ENCODE measurements at regions of chr11 and their contacts with region 1.

Region 1: GRCh38 chr11:43895601-43896000 is 15.0 kb downstream of the ALKBH3 start:
- DNase-seq: no peak
- ATAC-seq: no peak
- H3K4me3 Mint-ChIP-seq: no peak overlapping the region
- H3K27ac Mint-ChIP-seq: no peak overlapping the region
- H3K4me1 Mint-ChIP-seq: no peaks in the 10 kb centered on the region
- H3K27me3 Mint-ChIP-seq: no peaks in the 10 kb centered on the region

Region 2: DNA sequence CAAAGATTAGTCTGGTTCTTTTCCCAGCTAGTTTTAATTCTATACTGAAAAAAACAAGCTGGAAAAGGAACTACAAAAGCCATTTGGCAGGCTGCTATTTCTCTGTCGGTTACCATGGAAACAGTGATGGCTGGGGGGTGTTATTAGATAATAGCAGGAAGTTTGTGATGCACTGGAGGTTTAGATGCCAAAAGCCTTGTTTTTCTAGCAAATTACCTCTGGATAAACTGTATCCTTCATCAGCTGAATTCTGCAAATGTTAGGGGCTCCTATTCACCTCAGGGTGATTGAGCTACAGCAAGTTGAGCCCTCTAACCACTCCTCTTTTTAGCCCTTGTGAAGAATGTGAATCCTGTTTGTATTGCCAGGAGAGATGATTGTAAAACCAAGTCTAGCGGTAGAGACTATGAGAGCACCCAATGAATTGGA is 10.2 kb after region 1 on chr11:
- CTCF ChIA-PET with region 1: interaction called, 10 read pairs
- POLR2A ChIA-PET with region 1: no interaction called
- intact Hi-C with region 1: no loop called
- DNase-seq: no peak
- ATAC-seq: no peak
- H3K4me3 Mint-ChIP-seq: no peak overlapping the region
- H3K27ac Mint-ChIP-seq: no peak overlapping the region
- H3K4me1 Mint-ChIP-seq: peaks cover 12% of the 10 kb centered on the region
- H3K27me3 Mint-ChIP-seq: no peaks in the 10 kb centered on the region

Region 3: DNA sequence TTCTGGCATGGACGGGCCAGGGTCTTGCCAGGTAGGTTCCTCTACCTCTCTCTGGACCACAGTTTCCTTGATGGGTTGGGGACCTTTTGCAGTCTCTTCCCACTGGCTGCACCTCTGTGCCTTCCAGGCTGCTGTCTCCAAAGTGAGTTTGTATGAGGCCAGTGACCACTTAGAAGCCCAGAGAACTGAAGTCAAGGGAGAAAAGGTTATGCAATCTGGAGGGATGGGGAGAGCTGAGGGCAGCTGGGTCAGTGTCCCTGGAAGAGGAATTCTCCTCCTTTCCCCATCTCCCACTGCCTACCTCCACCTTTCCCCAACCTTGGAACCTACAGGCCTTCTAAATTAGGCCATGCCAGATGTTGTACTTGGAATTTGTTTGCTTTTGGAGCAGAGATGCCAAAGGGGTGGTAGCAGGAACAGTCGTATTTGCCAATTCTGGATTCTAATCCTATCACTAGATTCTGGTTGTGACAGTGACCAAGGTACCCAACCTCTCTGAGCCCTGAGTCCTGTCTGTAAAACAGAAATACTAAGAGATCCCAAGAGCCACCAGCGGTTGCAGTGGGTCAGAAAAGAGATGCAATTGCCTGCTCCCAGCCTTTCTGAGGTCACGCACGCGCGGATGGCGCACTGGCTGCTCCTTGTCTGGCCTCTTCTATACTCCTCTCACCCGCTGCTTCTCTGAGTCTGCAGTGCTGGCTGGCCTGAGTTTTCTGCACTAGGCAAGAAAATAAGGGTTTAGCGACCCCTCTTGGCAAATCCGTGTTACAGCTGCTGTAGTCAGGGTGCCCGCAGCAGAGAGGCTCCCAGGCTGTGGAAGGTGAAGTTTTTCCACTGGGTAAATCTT is 141.4 kb after region 1 on chr11:
- CTCF ChIA-PET with region 1: interaction called, 15 read pairs
- POLR2A ChIA-PET with region 1: no interaction called
- intact Hi-C with region 1: loop called (anchors 1 kb)
- DNase-seq: peak; percentile 65
- ATAC-seq: peak; percentile 90
- H3K4me3 Mint-ChIP-seq: no peak overlapping the region
- H3K27ac Mint-ChIP-seq: no peak overlapping the region
- H3K4me1 Mint-ChIP-seq: no peaks in the 10 kb centered on the region
- H3K27me3 Mint-ChIP-seq: peaks cover 5% of the 10 kb centered on the region

Region 4: GRCh38 chr11:44133335-44133946 is 237.8 kb after region 1 on chr11:
- CTCF ChIA-PET with region 1: no interaction called
- POLR2A ChIA-PET with region 1: no interaction called
- intact Hi-C with region 1: no loop called
- DNase-seq: no peak
- ATAC-seq: no peak
- H3K4me3 Mint-ChIP-seq: no peak overlapping the region
- H3K27ac Mint-ChIP-seq: no peak overlapping the region
- H3K4me1 Mint-ChIP-seq: no peaks in the 10 kb centered on the region
- H3K27me3 Mint-ChIP-seq: no peaks in the 10 kb centered on the region